Naive thymus-derived CD4-positive, alpha-beta T cell (primary cell): ENCODE measurements at regions of chr1 and their contacts with region 1.

Region 1: GRCh38 chr1:40862008-40862863 is at the start of gene CITED4:
- DNase-seq: peak; percentile 91 to 96 (median 95)
- ATAC-seq: peak; percentile 98
- H3K4me3 ChIP-seq: peak within 1 kb of the TSS; percentile 70
- H3K4me3 Mint-ChIP-seq: peak within 1 kb of the TSS; percentile 93 to 100 (median 96)
- H3K27ac ChIP-seq: peak within 1 kb of the TSS; percentile 73
- H3K27ac Mint-ChIP-seq: peak within 1 kb of the TSS; percentile 96 to 99 (median 99)
- H3K4me1 ChIP-seq: peaks cover 10 to 12% of the 10 kb centered on the region in 2 donors
- H3K4me1 Mint-ChIP-seq: peaks cover 11 to 31% (median 13%) of the 10 kb centered on the region in 7 donors
- H3K27me3 ChIP-seq: no peaks in the 10 kb centered on the region
- H3K27me3 Mint-ChIP-seq: peaks cover 0 to 26% (median 0%) of the 10 kb centered on the region in 5 donors
- total RNA-seq, gene CITED4: 20.5 to 42.8 (median 21.5) TPM

Region 2: GRCh38 chr1:40161125-40161887 is 700.9 kb before region 1 on chr1 and contains the start of gene RLF:
- CTCF ChIA-PET with region 1: no interaction called
- POLR2A ChIA-PET with region 1: no interaction called
- intact Hi-C with region 1: loop called (anchors 1 kb)
- DNase-seq: peak; percentile 91 to 97 (median 95)
- ATAC-seq: peak; percentile 99
- H3K4me3 ChIP-seq: peak within 1 kb of the TSS; percentile 76
- H3K4me3 Mint-ChIP-seq: no peak within 1 kb of the TSS
- H3K27ac ChIP-seq: peak within 1 kb of the TSS; percentile 88
- H3K27ac Mint-ChIP-seq: peak within 1 kb of the TSS in 2 of 9 donors; percentile 99 to 100
- H3K4me1 ChIP-seq: peaks cover 22 to 25% of the 10 kb centered on the region in 2 donors
- H3K4me1 Mint-ChIP-seq: peaks cover 5 to 19% (median 7%) of the 10 kb centered on the region in 7 donors
- H3K27me3 ChIP-seq: no peaks in the 10 kb centered on the region
- H3K27me3 Mint-ChIP-seq: no peaks in the 10 kb centered on the region
- total RNA-seq, gene RLF: 20.9 to 28.6 (median 24.7) TPM

Region 3: GRCh38 chr1:40691538-40692428 is 170.5 kb before region 1 on chr1 and contains the start of gene NFYC:
- CTCF ChIA-PET with region 1: no interaction called
- POLR2A ChIA-PET with region 1: interaction called, 41 read pairs
- intact Hi-C with region 1: loop called (anchors 1 to 5 kb)
- DNase-seq: peak; percentile 82 to 97 (median 96)
- ATAC-seq: peak; percentile 89
- H3K4me3 ChIP-seq: peak within 1 kb of the TSS; percentile 81
- H3K4me3 Mint-ChIP-seq: peak within 1 kb of the TSS; percentile 91 to 98 (median 95)
- H3K27ac ChIP-seq: peak within 1 kb of the TSS; percentile 99
- H3K27ac Mint-ChIP-seq: peak within 1 kb of the TSS; percentile 91 to 99 (median 97)
- H3K4me1 ChIP-seq: peaks cover 30 to 38% of the 10 kb centered on the region in 2 donors
- H3K4me1 Mint-ChIP-seq: peaks cover 29 to 73% (median 64%) of the 10 kb centered on the region in 7 donors
- H3K27me3 ChIP-seq: no peaks in the 10 kb centered on the region
- H3K27me3 Mint-ChIP-seq: no peaks in the 10 kb centered on the region
- total RNA-seq, gene NFYC: 44.2 to 88.5 (median 73.6) TPM

Region 4: GRCh38 chr1:40818264-40818961 is 43.8 kb before region 1 on chr1:
- CTCF ChIA-PET with region 1: interaction called, 3 read pairs
- POLR2A ChIA-PET with region 1: interaction called, 23 read pairs
- intact Hi-C with region 1: loop called (anchors 1 kb)
- DNase-seq: peak; percentile 66 to 90 (median 86)
- ATAC-seq: peak; percentile 98
- H3K4me3 ChIP-seq: peak overlapping the region; percentile 68
- H3K4me3 Mint-ChIP-seq: peak overlapping the region; percentile 76 to 89 (median 83)
- H3K27ac ChIP-seq: peak overlapping the region; percentile 50
- H3K27ac Mint-ChIP-seq: peak overlapping the region; percentile 74 to 89 (median 83)
- H3K4me1 ChIP-seq: peaks cover 0 to 5% of the 10 kb centered on the region in 2 donors
- H3K4me1 Mint-ChIP-seq: peaks cover 0 to 21% (median 11%) of the 10 kb centered on the region in 7 donors
- H3K27me3 ChIP-seq: no peaks in the 10 kb centered on the region
- H3K27me3 Mint-ChIP-seq: peaks cover 0 to 8% (median 0%) of the 10 kb centered on the region in 5 donors

Region 5: DNA sequence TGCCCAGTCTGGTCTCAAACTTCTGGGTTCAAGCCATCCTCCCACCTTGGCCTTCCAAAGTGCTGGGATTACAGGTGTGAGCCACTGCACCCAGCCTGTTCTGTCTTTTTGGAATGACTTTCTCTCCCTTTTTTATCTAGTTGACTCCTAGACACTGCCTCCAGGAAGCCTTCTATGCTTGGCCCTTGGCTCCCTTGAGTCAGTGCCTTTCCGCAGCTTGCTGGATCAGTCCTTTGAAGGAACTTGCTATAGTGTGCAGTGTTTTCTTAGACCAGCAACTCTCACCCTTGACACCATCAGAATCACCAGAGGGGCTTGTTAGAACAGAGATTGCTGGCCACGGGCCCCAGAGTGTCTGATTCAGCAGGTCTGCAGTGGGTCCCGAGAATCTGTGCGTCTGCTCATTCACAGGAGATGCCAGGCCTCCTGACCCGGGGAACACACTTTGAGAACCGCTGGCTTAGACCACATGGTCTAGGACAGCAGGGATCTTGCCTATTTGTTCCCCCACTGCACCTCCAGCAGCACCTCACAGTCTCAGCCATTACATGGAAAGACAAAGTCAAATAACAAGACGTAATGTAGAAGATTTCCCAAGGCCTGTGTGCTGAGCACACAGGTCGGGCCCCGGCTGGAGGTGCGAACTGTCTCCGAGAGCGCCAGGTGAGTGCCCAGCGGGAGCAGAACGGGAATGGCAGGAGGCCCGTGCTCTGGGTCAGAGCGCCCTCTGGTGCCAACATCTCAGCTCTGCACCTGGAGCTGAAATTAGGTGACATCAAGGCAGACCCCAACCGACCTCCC is 89.9 kb after region 1 on chr1:
- CTCF ChIA-PET with region 1: interaction called, 3 read pairs
- POLR2A ChIA-PET with region 1: interaction called, 6 read pairs
- intact Hi-C with region 1: loop called in 1 of 2 experiments (anchors 1 kb)
- DNase-seq: peak; percentile 24 to 67 (median 39)
- ATAC-seq: peak; percentile 71
- H3K4me3 ChIP-seq: no peak overlapping the region
- H3K4me3 Mint-ChIP-seq: peak overlapping the region in 4 of 10 donors; percentile 18 to 49 (median 28)
- H3K27ac ChIP-seq: no peak overlapping the region
- H3K27ac Mint-ChIP-seq: no peak overlapping the region
- H3K4me1 ChIP-seq: peaks cover 0 to 3% of the 10 kb centered on the region in 2 donors
- H3K4me1 Mint-ChIP-seq: peaks cover 5 to 19% (median 8%) of the 10 kb centered on the region in 7 donors
- H3K27me3 ChIP-seq: no peaks in the 10 kb centered on the region
- H3K27me3 Mint-ChIP-seq: peaks cover 9 to 34% (median 29%) of the 10 kb centered on the region in 5 donors

Region 6: GRCh38 chr1:41360993-41361753 is 498.9 kb after region 1 on chr1 and contains the start of gene FOXO6:
- CTCF ChIA-PET with region 1: no interaction called
- POLR2A ChIA-PET with region 1: no interaction called
- intact Hi-C with region 1: loop called in 1 of 2 experiments (anchors 5 kb)
- DNase-seq: peak; percentile 87 to 94 (median 91)
- ATAC-seq: peak; percentile 95
- H3K4me3 ChIP-seq: peak within 1 kb of the TSS; percentile 51
- H3K4me3 Mint-ChIP-seq: peak within 1 kb of the TSS; percentile 65 to 86 (median 80)
- H3K27ac ChIP-seq: peak within 1 kb of the TSS; percentile 25
- H3K27ac Mint-ChIP-seq: peak within 1 kb of the TSS in 7 of 9 donors; percentile 3 to 91 (median 73)
- H3K4me1 ChIP-seq: peaks cover 4 to 6% of the 10 kb centered on the region in 2 donors
- H3K4me1 Mint-ChIP-seq: peaks cover 4 to 28% (median 9%) of the 10 kb centered on the region in 7 donors
- H3K27me3 ChIP-seq: peaks cover 5 to 7% of the 10 kb centered on the region in 2 donors
- H3K27me3 Mint-ChIP-seq: peaks cover 10 to 58% (median 35%) of the 10 kb centered on the region in 5 donors
- total RNA-seq, gene FOXO6: 0.66 to 1.3 TPM in 2 of 5 experiments, not detected in the others